Activated naive CD4-positive, alpha-beta T cell treated with anti-CD3 and anti-CD28 coated beads for 36 hours (primary cell): ENCODE measurements at regions of chr20 and their contacts with region 1.

Region 1: DNA sequence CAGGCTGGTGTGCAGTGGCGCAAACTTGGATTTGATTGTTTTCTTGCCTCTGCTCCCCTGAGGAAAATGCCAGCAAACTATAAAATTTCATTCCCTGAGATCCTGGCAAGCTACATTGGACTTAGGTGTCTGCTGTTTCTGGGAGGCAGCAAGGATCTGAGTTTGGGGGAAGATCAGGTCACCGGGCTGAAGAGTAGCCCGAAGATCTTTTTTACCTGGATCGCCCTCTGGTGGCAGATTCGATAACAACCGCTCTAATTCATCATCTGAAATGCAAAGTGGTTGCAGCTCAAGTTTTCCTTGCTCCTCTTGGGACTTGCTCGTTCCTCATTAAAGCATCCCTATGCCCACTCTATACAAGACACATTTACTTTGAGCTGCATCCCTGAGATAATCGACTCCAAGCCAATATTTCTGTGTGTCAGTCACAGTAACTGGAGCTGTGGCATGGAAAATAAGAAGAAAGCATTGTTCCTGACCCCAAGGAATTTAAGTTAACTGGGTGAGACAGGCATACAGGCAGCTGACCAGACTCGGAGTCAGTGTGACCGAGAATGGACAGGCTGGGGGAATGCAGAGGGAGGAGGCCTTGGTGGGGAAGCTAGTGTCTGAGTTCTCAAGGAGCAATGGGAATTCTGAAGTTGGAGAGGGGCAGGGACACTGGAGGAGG is 131.8 kb upstream of the PROKR2 start:
- DNase-seq: peak; percentile 78
- H3K4me3 Mint-ChIP-seq: no peak overlapping the region
- H3K27ac Mint-ChIP-seq: no peak overlapping the region
- H3K4me1 Mint-ChIP-seq: no peaks in the 10 kb centered on the region
- H3K27me3 Mint-ChIP-seq: peaks cover 25% of the 10 kb centered on the region

Region 2: GRCh38 chr20:5205348-5206210 is 243.0 kb before region 1 on chr20:
- CTCF ChIA-PET with region 1: interaction called, 57 read pairs
- intact Hi-C with region 1: loop called (anchors 1 kb)
- DNase-seq: peak; percentile 86
- H3K4me3 Mint-ChIP-seq: no peak overlapping the region
- H3K27ac Mint-ChIP-seq: no peak overlapping the region
- H3K4me1 Mint-ChIP-seq: peaks cover 2% of the 10 kb centered on the region
- H3K27me3 Mint-ChIP-seq: no peaks in the 10 kb centered on the region

Region 3: GRCh38 chr20:5222919-5223634 is 225.5 kb before region 1 on chr20:
- CTCF ChIA-PET with region 1: interaction called, 7 read pairs
- intact Hi-C with region 1: loop called (anchors 5 kb)
- DNase-seq: peak; percentile 83
- H3K4me3 Mint-ChIP-seq: no peak overlapping the region
- H3K27ac Mint-ChIP-seq: no peak overlapping the region
- H3K4me1 Mint-ChIP-seq: no peaks in the 10 kb centered on the region
- H3K27me3 Mint-ChIP-seq: peaks cover 2% of the 10 kb centered on the region

Region 4: GRCh38 chr20:5316188-5317158 is 132.1 kb before region 1 on chr20 and contains the start of gene PROKR2:
- CTCF ChIA-PET with region 1: interaction called, 3 read pairs
- intact Hi-C with region 1: loop called (anchors 5 kb)
- DNase-seq: peak; percentile 34
- H3K4me3 Mint-ChIP-seq: peak within 1 kb of the TSS; percentile 38
- H3K27ac Mint-ChIP-seq: no peak within 1 kb of the TSS
- H3K4me1 Mint-ChIP-seq: peaks cover 5% of the 10 kb centered on the region
- H3K27me3 Mint-ChIP-seq: peaks cover 44% of the 10 kb centered on the region
- total RNA-seq, gene PROKR2: not detected

Region 5: DNA sequence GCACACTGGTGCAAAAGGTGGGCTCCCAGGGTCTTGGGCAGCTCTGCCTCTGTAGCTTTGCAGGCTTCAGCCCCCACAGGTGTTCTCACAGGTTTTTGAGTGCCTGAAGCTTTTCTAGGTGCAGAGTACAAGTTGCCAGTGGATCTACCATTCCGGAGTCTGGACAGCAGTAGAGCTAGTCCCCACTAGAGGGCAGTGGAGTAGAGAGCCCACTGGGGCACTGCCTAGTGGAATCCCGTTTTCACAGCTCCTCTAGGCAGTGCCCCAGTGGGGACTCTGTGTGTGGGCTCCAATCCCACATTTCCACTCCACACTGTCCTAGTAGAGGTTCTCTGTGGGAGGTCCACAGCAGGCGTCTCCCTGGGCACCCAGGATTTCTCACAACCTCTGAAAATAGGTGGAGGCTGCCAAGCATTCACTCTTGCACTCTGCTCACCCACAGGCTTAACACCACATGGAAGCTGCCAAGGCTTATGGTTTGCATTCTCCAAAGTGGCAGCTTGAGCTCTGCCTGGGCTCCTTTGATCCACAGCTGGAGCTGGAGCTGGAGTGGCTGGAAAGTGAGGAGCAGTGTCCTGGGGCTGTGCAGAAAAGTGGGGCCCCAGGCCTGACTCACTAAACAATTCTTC is 45.6 kb before region 1 on chr20:
- CTCF ChIA-PET with region 1: interaction called, 20 read pairs
- intact Hi-C with region 1: no loop called
- DNase-seq: peak; percentile 19
- H3K4me3 Mint-ChIP-seq: no peak overlapping the region
- H3K27ac Mint-ChIP-seq: no peak overlapping the region
- H3K4me1 Mint-ChIP-seq: no peaks in the 10 kb centered on the region
- H3K27me3 Mint-ChIP-seq: peaks cover 30% of the 10 kb centered on the region

Region 6: DNA sequence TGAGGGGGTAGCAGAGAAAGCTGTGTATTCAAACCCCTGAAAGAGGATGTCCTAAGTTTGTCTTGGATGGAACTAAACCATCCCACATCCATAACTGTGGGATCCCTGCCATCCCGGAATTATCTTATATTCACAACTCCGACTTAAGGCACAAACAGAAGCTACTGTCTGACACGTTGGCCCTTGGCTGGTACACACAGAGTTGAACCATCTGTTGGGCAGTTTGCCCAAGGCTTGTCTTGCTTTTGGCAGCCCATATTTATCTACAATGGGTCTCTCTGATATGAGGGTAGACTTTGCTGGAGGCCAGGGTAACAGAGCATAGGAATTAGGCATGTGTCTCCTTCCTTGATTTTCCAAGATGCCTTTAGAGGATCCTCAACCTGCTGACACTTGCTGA is 15.2 kb before region 1 on chr20:
- CTCF ChIA-PET with region 1: interaction called, 10 read pairs
- intact Hi-C with region 1: no loop called
- DNase-seq: no peak
- H3K4me3 Mint-ChIP-seq: no peak overlapping the region
- H3K27ac Mint-ChIP-seq: no peak overlapping the region
- H3K4me1 Mint-ChIP-seq: no peaks in the 10 kb centered on the region
- H3K27me3 Mint-ChIP-seq: peaks cover 11% of the 10 kb centered on the region

Region 7: GRCh38 chr20:6142348-6142993 is 693.9 kb after region 1 on chr20:
- CTCF ChIA-PET with region 1: no interaction called
- intact Hi-C with region 1: no loop called
- DNase-seq: peak; percentile 67
- H3K4me3 Mint-ChIP-seq: no peak overlapping the region
- H3K27ac Mint-ChIP-seq: no peak overlapping the region
- H3K4me1 Mint-ChIP-seq: no peaks in the 10 kb centered on the region
- H3K27me3 Mint-ChIP-seq: peaks cover 10% of the 10 kb centered on the region